GM10248 (cell line): ENCODE measurements at regions of chr12 and their contacts with region 1.

Region 1: DNA sequence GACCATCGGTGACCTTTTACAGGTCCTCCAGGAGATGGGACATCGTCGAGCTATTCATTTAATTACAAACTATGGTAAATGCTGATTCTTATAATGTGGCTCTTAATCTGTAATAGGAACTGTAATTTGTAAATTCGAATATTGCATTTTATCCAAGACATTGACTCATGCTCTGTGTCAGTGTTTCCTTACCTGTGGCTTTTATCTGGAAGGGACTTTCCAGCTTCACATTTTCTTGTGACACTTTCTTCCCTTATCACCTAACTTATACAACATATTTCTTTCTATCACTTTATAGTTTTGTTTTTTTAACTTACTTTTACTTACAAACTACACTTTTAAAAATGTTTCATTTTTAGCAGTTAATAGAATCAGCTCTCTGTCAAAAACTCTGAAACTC is 14.8 kb downstream of the IRAK3 start:
- DNase-seq: no peak
- CTCF ChIP-seq: no peak

Region 2: DNA sequence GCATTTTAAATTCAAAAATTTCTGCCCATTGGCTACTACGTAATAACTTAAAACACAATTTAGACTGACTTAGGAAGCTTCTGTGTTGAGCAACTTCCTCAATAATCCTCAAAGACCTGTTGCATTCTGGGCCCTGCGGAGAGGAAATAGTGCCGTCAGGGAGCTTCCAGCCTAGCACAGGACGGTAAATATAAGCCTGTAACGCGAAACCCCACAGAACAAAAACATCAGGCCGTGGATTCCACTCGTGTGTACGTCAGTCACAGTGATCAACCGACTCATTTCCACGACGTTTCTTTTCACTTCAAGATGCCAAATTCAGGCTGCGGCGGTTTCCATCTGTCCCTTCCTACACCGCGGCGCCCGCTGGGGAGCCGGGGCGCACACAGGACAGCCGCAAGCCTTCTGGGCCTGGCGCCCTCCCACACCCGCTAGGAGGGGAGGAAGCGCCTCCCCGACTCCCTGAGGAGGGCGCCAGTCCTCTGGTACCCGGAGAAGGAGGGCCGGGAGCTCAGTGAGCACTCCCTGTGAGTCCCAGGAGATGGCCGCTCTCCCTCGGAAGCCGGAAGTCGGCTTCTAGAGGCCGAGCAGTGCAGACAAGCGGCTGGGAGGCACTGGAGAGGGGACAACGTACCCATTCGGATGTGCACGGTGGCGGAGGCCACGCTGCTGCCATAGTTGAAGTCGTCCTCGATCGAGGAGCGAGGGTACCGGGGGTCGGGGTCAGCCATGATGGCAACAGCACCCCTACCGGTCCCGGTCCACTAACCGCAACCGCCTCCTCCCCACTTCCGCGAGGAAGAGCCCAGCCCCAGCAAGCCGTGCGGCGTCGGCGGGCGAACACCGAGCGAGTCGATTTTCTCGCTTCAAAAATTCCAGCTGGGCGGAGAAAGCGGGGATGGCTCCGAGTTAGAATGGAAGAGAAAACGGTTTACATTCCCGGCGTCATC is 34.3 kb before region 1 on chr12 and contains the start of gene TMBIM4:
- CTCF ChIA-PET with region 1: interaction called, 10 read pairs
- POLR2A ChIA-PET with region 1: no interaction called
- DNase-seq: peak; percentile 86
- CTCF ChIP-seq: peak; percentile 41